Dendritic cell treated with granulocyte-macrophage colony-stimulating factor and Interleukin-4, amounts not matched to agents 40 ng/mL and 50 ng/mL, for 4 days (primary cell): ENCODE measurements at regions of chr3 and their contacts with region 1.

Region 1: DNA sequence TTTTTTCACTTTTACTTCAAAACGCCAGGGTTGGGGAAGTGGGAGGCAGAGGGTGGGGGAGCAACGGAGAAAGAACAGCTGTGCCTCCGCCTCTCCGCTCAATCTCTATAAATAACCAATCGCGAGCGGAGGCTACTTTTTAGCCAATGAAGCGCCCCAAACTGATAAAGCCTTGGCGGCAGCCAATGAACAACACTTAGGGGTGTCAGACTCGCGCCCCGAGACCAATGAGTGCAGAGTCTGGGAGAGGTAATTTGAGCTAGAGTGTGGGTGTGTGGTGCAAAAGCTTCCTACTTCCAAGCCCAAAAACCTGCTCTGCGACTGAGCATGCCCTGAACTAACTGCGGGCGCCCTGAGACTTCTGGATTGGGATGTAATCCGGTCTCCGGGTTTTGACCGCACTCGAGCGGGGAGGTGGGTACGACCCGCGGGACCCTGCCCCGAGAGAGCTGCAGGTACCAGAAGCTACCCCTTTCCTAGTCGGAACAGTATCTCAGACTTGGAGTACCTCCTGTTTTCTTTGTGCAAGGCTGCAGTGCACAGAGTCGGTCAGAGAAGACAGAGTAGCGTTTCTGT is 800 bp upstream of the RAP2B start:
- H3K4me3 Mint-ChIP-seq: peak overlapping the region; percentile 88
- H3K27ac Mint-ChIP-seq: peak overlapping the region; percentile 100
- H3K4me1 Mint-ChIP-seq: peaks cover 24% of the 10 kb centered on the region
- H3K27me3 Mint-ChIP-seq: no peaks in the 10 kb centered on the region

Region 2: GRCh38 chr3:153127788-153128187 is 33.4 kb before region 1 on chr3:
- intact Hi-C with region 1: loop called (anchors 5 kb)
- H3K4me3 Mint-ChIP-seq: no peak overlapping the region
- H3K27ac Mint-ChIP-seq: peak overlapping the region; percentile 11
- H3K4me1 Mint-ChIP-seq: peaks cover 41% of the 10 kb centered on the region
- H3K27me3 Mint-ChIP-seq: no peaks in the 10 kb centered on the region

Region 3: GRCh38 chr3:153209596-153209995 is 48.4 kb after region 1 on chr3:
- intact Hi-C with region 1: loop called (anchors 5 kb)
- H3K4me3 Mint-ChIP-seq: no peak overlapping the region
- H3K27ac Mint-ChIP-seq: peak overlapping the region; percentile 33
- H3K4me1 Mint-ChIP-seq: peaks cover 26% of the 10 kb centered on the region
- H3K27me3 Mint-ChIP-seq: no peaks in the 10 kb centered on the region

Region 4: DNA sequence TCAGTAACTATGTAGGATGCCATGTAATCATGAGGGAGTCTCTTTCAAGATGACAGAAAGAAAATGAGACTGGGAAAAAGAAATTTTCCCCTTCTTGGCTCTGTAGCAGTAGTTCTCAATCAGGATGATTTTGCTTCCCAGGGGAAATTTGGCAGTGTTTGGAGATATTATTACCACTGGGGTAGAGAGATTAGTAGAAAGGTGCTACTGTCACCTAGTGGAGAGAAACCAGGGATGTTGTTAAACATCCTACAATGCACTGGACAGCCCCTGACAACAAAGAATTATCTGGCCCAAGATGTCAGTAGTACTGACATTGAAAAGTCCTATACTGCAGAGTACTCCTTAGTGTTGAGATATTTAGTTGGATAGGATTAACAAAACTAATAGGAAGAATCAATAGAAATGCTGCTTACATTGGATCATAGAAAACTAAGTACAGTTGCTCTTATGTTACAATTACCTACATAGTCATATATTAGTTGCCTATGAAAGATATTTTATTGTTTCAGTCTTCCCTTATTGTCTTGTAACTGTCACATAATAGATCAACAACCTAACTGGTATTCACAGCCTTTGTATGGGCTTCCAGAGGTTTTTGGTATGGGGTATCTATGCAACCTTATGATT is 434.1 kb after region 1 on chr3:
- intact Hi-C with region 1: loop called (anchors 5 kb)
- H3K4me3 Mint-ChIP-seq: no peak overlapping the region
- H3K27ac Mint-ChIP-seq: no peak overlapping the region
- H3K4me1 Mint-ChIP-seq: peaks cover 20% of the 10 kb centered on the region
- H3K27me3 Mint-ChIP-seq: peaks cover 2% of the 10 kb centered on the region